ENCODE measurements at regions of chr17 and their contacts with region 1.

Region 1: DNA sequence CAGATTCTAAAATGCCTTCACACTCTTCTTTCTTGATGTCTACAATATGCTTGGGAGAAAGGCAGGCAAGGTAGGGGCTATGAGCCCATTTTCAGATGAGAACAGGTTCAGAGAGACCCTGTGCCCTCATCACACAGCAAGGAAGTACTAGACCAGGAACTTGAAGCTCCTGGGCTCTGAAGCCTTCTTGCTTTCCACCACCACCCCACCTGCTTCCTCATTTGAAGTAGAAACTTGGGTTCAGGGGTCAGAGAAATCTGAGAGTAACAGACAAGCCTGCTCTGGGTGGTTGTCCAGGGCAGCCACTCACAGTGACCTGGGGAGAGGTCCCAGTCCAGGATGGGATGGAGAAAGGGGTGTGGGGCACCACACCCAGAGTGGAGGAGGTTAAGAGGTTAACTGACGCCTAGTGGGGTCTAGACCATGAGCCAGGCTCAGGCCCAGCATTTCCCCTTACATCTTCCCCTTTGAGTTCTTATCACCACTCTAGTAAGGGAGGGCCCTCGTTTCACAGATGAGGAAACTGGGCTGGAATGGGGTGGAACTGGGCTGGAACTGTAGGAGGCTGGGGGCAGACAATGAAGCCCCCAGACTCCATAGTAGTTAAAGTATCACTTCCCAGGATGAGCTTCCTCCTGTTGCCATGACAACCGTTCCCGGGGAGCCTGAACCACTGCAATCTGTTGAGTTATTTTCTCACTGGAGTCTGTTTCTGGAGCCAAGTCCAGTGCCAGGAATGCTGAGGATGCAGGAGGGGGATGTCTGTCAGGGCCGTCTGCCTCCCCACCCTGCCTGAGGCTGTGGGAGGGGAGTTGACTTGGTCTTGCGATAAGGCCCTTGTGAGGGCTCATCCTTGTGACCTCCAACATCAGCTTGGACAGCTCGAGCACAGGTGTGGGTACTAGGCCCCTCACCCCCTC is 16.2 kb upstream of the PHF12 start:
- DNase-seq: no peak
- ATAC-seq: no peak
- H3K4me3 ChIP-seq: no peak overlapping the region
- H3K27ac ChIP-seq: no peak overlapping the region
- H3K4me1 ChIP-seq: peaks cover 0 to 3% of the 10 kb centered on the region in 2 experiments; a peak in 1 of 5 replicates
- H3K27me3 ChIP-seq: peaks cover 27 to 56% of the 10 kb centered on the region in 2 experiments; a peak in 4 of 5 replicates
- CTCF ChIP-seq: no peak
- EP300 ChIP-seq: no peak
- POLR2A ChIP-seq: no peak
- RAD21 ChIP-seq: no peak

Region 2: DNA sequence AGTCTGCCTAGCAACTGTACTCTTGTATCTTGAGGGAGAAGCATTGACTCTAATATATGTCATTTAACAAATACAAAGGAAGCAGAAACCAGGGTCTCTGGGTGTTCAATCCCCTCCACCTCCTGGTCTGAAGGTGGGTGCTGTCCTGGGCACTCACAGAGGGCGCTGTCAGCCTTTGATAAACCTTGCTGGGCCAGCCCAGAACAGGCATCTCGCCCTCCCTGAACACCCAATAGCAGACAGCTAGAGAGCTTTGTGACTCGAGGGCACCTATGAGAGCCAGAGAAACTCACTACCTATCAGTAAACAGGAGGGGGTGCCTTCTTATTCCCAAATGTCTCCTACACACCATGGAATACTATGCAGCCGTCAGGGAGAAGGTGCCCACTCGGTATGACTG is 69.1 kb after region 1 on chr17:
- CTCF ChIA-PET with region 1: no interaction called
- POLR2A ChIA-PET with region 1: no interaction called
- in situ Hi-C with region 1: no loop called
- intact Hi-C with region 1: no loop called
- DNase-seq: no peak
- ATAC-seq: no peak
- H3K4me3 ChIP-seq: no peak overlapping the region
- H3K27ac ChIP-seq: no peak overlapping the region
- H3K4me1 ChIP-seq: peaks cover 4 to 6% of the 10 kb centered on the region in 2 experiments; a peak in 3 of 5 replicates
- H3K27me3 ChIP-seq: peaks cover 30 to 38% of the 10 kb centered on the region in 2 experiments; a peak in 4 of 5 replicates
- CTCF ChIP-seq: no peak
- EP300 ChIP-seq: no peak
- POLR2A ChIP-seq: no peak
- RAD21 ChIP-seq: no peak

Region 3: GRCh38 chr17:29111816-29112499 is 144.5 kb after region 1 on chr17:
- CTCF ChIA-PET with region 1: interaction called, 23 read pairs
- POLR2A ChIA-PET with region 1: interaction called, 14 read pairs
- in situ Hi-C with region 1: loop called (anchors 5 kb)
- intact Hi-C with region 1: loop called (anchors 1 kb)
- DNase-seq: peak; percentile 65 to 76 (median 70)
- ATAC-seq: peak; percentile 89
- H3K4me3 ChIP-seq: no peak overlapping the region
- H3K27ac ChIP-seq: no peak overlapping the region
- H3K4me1 ChIP-seq: peaks cover 9 to 26% of the 10 kb centered on the region in 2 experiments; a peak in 4 of 5 replicates
- H3K27me3 ChIP-seq: no peaks in the 10 kb centered on the region
- CTCF ChIP-seq: peak; percentile 88 to 90 (median 89)
- EP300 ChIP-seq: no peak
- POLR2A ChIP-seq: no peak
- RAD21 ChIP-seq: peak; percentile 77 to 84

Region 4: GRCh38 chr17:29116804-29117772 is 149.6 kb after region 1 on chr17:
- CTCF ChIA-PET with region 1: interaction called, 23 read pairs
- POLR2A ChIA-PET with region 1: interaction called, 14 read pairs
- in situ Hi-C with region 1: no loop called
- intact Hi-C with region 1: loop called (anchors 1 kb)
- DNase-seq: peak; percentile 75 to 82 (median 79)
- ATAC-seq: peak; percentile 88
- H3K4me3 ChIP-seq: no peak overlapping the region
- H3K27ac ChIP-seq: no peak overlapping the region
- H3K4me1 ChIP-seq: peaks cover 10 to 11% of the 10 kb centered on the region in 2 experiments; a peak in 4 of 5 replicates
- H3K27me3 ChIP-seq: no peaks in the 10 kb centered on the region
- CTCF ChIP-seq: peak; percentile 86 to 98 (median 87)
- EP300 ChIP-seq: no peak
- POLR2A ChIP-seq: no peak
- RAD21 ChIP-seq: peak; percentile 70 to 80

Region 5: DNA sequence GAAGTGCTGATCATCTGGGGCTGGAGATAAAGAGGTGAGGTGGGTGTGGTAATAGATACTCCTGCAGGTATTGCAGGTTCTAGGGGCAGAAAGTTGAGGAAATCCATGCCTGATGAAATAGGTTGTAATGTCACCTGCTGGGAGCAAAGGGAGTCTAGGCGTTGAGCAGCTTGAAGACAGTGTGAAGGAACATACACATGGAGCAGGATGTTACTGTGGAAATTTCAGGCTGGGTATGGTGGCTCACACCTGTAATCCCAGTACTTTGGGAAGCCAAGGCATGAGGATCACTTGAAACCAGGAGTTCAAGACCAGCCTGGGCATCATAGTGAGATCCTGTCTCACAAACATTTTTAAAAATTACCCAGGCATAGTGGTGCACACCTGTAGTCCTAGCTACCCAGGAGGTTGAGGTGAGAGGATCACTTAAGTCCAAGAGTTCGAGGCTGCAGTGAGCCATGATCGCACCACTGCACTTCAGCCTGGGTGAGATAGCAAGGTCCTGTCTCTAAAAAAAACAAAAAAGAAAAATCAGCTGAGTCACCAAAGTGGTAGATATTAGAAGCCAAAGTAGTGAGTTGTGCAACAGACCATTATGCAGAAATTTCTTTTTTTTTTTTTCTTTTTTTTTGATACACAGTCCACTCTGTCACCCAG is 270.1 kb after region 1 on chr17:
- CTCF ChIA-PET with region 1: no interaction called
- POLR2A ChIA-PET with region 1: no interaction called
- in situ Hi-C with region 1: no loop called
- intact Hi-C with region 1: no loop called
- DNase-seq: peak in 1 of 4 experiments; percentile 30
- ATAC-seq: peak; percentile 74
- H3K4me3 ChIP-seq: no peak overlapping the region
- H3K27ac ChIP-seq: peak overlapping the region; percentile 38; the same call in 1 of the 3 replicates
- H3K4me1 ChIP-seq: peaks cover 3 to 13% of the 10 kb centered on the region in 2 experiments; a peak in 3 of 5 replicates
- H3K27me3 ChIP-seq: no peaks in the 10 kb centered on the region
- CTCF ChIP-seq: no peak
- EP300 ChIP-seq: peak; percentile 84
- POLR2A ChIP-seq: no peak
- RAD21 ChIP-seq: no peak

Measured in K562 (cell line).